CD8-positive, alpha-beta T cell (primary cell): ENCODE measurements at regions of chr12 and their contacts with region 1.

Region 1: GRCh38 chr12:112978163-112979040 is at the start of gene OAS2:
- DNase-seq: peak; percentile 51 to 95 (median 80)
- ATAC-seq: peak; percentile 92
- H3K4me3 ChIP-seq: peak within 1 kb of the TSS; percentile 63 to 89
- H3K4me3 Mint-ChIP-seq: peak within 1 kb of the TSS; percentile 99
- H3K27ac ChIP-seq: peak within 1 kb of the TSS; percentile 72 to 85
- H3K27ac Mint-ChIP-seq: peak within 1 kb of the TSS; percentile 99
- H3K4me1 ChIP-seq: peaks cover 33% of the 10 kb centered on the region
- H3K4me1 Mint-ChIP-seq: peaks cover 52% of the 10 kb centered on the region
- H3K27me3 ChIP-seq: no peaks in the 10 kb centered on the region
- H3K27me3 Mint-ChIP-seq: no peaks in the 10 kb centered on the region
- CTCF ChIP-seq: no peak
- total RNA-seq, gene OAS2: 9.2 to 10.7 TPM

Region 2: DNA sequence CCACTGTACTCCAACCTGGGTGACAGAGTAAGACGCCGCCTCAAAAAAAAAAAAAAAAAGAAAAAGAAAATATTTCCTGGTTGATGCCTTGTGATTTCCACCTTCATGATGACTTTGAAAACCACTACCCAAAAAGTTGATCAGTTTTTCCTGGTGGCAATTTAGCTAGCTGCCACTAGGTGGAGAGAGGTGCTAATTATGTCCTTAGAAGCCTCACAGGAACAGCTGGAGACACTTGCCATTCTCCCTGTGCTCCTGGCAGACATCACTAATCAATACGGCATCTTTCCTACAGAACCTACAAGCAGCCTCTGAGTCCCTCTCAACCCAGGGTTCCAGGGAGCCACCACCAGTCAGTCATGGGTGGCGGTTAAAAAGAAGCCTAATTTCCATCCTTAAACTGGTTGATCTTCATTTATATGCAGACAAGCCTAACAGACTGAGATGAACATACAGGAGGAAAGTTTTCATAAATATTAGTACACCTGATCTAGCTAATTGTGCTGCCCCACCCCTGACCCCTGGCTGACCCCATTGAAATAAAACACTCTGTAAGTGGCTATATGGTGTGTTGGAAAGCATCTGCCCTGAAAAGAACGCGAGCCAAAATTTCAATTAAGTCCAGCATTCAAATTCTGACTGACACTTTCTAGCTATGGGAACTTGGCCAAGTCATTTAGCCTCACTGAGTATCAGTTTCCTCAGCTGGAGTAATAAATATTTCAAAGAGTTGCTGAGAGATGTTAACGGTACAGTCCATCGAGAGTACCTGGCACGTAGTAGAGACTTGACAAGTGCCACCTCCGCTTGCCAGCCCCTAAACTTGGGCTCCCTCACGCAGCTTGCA is 77.9 kb before region 1 on chr12:
- CTCF ChIA-PET with region 1: interaction called, 19 read pairs
- POLR2A ChIA-PET with region 1: interaction called, 6 read pairs
- intact Hi-C with region 1: loop called (anchors 5 kb)
- DNase-seq: peak in 6 of 9 experiments; percentile 7 to 65 (median 35)
- ATAC-seq: peak; percentile 59
- H3K4me3 ChIP-seq: no peak overlapping the region
- H3K4me3 Mint-ChIP-seq: no peak overlapping the region
- H3K27ac ChIP-seq: no peak overlapping the region
- H3K27ac Mint-ChIP-seq: no peak overlapping the region
- H3K4me1 ChIP-seq: peaks cover 4% of the 10 kb centered on the region
- H3K4me1 Mint-ChIP-seq: peaks cover 22% of the 10 kb centered on the region
- H3K27me3 ChIP-seq: no peaks in the 10 kb centered on the region
- H3K27me3 Mint-ChIP-seq: peaks cover 7% of the 10 kb centered on the region
- CTCF ChIP-seq: peak; percentile 71

Region 3: GRCh38 chr12:112937741-112938719 is 40.4 kb before region 1 on chr12 and contains the start of gene OAS3:
- CTCF ChIA-PET with region 1: interaction called, 4 read pairs
- POLR2A ChIA-PET with region 1: interaction called, 33 read pairs
- intact Hi-C with region 1: loop called in 1 of 2 experiments (anchors 1 kb)
- DNase-seq: peak; percentile 20 to 92 (median 62)
- ATAC-seq: peak; percentile 67
- H3K4me3 ChIP-seq: peak within 1 kb of the TSS; percentile 68 to 81
- H3K4me3 Mint-ChIP-seq: peak within 1 kb of the TSS; percentile 87
- H3K27ac ChIP-seq: peak within 1 kb of the TSS; percentile 69 to 78
- H3K27ac Mint-ChIP-seq: peak within 1 kb of the TSS; percentile 89
- H3K4me1 ChIP-seq: peaks cover 20% of the 10 kb centered on the region
- H3K4me1 Mint-ChIP-seq: peaks cover 30% of the 10 kb centered on the region
- H3K27me3 ChIP-seq: no peaks in the 10 kb centered on the region
- H3K27me3 Mint-ChIP-seq: no peaks in the 10 kb centered on the region
- CTCF ChIP-seq: no peak
- total RNA-seq, gene OAS3: 7.7 to 8.2 TPM

Region 4: DNA sequence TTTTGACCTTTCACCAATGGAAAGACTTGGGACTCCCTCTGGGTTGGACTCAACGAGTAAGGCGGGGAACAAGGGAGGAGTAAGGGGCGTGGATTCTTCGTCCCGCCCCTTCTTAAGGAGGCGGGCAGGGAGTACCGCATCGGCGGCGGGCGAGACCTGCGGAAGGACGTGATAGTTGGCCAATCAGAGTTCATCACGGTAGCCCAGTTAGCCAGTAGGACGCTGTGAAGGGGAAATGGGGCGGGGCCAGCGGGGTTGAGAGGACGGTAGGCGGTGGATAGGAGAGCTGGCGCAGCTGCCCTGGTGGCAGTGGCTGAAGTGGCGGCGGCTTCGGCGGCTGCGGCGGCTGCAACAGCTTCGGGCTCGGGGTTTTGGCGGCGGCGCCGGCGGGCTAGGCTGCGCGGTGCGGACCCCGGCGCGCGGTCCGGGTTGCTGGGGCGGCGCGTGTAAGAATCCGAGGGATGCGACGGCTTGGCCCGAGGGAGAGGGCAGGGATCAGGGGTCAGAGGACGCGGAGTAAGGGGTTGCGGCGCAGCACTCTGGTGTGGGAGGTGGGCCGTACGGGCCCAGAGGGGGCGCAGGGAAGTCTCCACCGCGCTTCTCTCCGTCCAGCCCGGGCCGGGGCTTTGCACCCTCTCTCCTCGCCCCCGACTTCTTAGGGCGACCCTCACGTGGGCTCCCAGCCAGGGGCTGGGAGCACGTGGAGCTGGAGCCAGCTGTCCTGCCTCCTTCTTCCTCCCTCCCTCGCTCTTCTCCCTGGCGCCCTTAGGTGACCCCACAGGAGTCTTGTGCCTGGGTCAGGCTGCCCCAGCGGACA is 243.0 kb after region 1 on chr12 and contains the start of gene TPCN1:
- CTCF ChIA-PET with region 1: no interaction called
- POLR2A ChIA-PET with region 1: no interaction called
- intact Hi-C with region 1: loop called (anchors 2 to 5 kb)
- DNase-seq: peak; percentile 96 to 100 (median 98)
- ATAC-seq: peak; percentile 94
- H3K4me3 ChIP-seq: peak within 1 kb of the TSS; percentile 66 to 85
- H3K4me3 Mint-ChIP-seq: peak within 1 kb of the TSS; percentile 86
- H3K27ac ChIP-seq: peak within 1 kb of the TSS; percentile 62 to 63
- H3K27ac Mint-ChIP-seq: peak within 1 kb of the TSS; percentile 83
- H3K4me1 ChIP-seq: peaks cover 27% of the 10 kb centered on the region
- H3K4me1 Mint-ChIP-seq: peaks cover 45% of the 10 kb centered on the region
- H3K27me3 ChIP-seq: no peaks in the 10 kb centered on the region
- H3K27me3 Mint-ChIP-seq: no peaks in the 10 kb centered on the region
- CTCF ChIP-seq: no peak
- total RNA-seq, gene TPCN1: 32.8 to 37.0 TPM

Region 5: DNA sequence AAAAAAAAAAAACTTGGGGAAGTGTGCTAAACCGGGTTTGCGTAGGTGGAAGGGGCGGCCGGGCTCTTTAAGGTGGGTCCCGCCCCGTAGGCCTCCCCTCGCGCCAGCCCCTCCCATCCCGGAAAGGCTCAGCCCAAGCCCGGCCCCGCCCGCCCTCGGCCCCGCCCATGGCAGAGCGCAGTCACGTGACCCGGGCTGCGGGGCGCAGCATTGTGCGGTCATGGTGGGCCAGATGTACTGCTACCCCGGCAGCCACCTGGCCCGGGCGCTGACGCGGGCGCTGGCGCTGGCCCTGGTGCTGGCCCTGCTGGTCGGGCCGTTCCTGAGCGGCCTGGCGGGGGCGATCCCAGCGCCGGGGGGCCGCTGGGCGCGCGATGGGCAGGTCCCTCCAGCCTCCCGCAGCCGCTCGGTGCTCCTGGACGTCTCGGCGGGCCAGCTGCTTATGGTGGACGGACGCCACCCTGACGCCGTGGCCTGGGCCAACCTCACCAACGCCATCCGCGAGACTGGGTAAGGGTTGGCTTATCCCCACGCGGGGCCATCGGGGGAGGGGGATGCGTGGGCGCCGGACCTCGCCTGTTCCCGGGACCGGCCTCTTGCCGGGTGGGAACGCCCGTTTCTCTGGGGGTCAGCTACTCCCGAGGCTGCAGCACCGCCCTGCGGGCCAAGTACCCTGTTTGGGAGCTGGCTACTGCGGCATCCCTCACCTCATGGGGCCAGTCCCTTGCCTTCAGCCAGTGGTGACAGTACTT is 380.2 kb after region 1 on chr12 and contains the start of gene PLBD2:
- CTCF ChIA-PET with region 1: no interaction called
- POLR2A ChIA-PET with region 1: no interaction called
- intact Hi-C with region 1: loop called in 1 of 2 experiments (anchors 5 kb)
- DNase-seq: peak; percentile 92 to 97 (median 94)
- ATAC-seq: peak; percentile 97
- H3K4me3 ChIP-seq: peak within 1 kb of the TSS; percentile 72 to 79
- H3K4me3 Mint-ChIP-seq: peak within 1 kb of the TSS; percentile 91
- H3K27ac ChIP-seq: peak within 1 kb of the TSS; percentile 81 to 84
- H3K27ac Mint-ChIP-seq: peak within 1 kb of the TSS; percentile 96
- H3K4me1 ChIP-seq: peaks cover 14% of the 10 kb centered on the region
- H3K4me1 Mint-ChIP-seq: peaks cover 16% of the 10 kb centered on the region
- H3K27me3 ChIP-seq: peaks cover 0 to 2% of the 10 kb centered on the region in 2 experiments
- H3K27me3 Mint-ChIP-seq: no peaks in the 10 kb centered on the region
- CTCF ChIP-seq: no peak
- total RNA-seq, gene PLBD2: 9.2 to 9.9 TPM